ENCODE measurements at regions of chr19 and their contacts with region 1.

Region 1: DNA sequence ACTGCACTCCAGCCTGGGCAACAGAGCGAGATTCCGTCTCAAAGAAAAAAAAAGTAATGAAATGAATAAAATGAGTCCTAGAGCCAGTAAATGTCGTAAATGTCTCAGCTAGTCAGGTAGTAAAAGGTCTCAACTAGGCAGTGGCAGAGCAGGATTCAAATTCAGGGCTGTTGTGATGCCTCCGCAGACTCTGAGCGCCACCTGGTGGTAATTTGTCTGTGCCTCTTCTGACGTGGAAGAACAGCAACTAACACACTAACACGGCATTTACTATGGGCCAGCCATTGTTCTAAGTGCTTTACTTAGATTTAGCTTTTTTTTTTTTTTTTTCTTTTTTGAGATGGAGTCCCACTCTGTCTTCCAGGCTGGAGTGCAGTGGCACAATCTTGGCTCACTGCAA is 30.2 kb downstream of the CYP2F1 start:
- DNase-seq: peak; percentile 82
- H3K4me3 ChIP-seq: no peak overlapping the region
- H3K27ac ChIP-seq: no peak overlapping the region
- H3K4me1 ChIP-seq: no peaks in the 10 kb centered on the region
- H3K27me3 ChIP-seq: peaks cover 8% of the 10 kb centered on the region; the same call in 1 of the 2 replicates

Region 2: DNA sequence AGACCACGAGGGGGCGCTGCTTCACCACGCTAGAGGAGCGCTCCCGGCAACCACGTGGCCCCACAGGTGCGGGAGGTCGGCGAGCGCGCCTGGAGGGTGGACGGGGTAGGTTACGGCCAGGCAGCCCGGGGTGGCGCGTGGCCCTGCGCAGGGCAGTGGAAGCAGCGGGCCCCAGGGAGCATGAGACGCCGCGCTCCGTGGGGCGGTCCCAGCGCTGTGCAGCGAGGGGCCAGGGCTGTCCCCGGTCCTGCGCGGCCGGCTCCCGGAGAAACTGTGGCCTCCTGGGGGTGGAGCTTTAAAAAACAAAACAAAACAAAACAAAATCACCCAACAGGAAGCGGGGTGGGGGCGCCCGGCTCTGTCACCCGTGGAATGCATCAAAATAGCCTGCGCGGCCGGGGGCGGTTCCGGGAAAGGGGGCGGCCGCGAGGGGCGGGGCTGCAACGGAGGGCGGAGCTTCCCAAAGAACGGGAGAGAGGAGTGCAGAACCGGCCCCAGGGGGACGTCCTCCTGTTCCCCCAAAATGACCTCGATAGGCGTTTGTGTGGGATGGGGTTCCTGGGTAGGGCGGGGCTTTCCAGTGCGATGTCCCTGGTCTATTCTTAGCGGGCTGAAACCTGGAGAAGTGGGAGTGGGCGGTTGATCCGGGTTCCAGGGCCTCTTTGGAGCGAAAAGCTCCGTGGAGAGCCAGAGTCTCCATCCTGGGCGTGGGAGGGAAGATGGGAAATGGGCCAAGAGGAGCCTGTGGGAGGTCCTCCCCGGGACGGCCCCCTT is 481.3 kb before region 1 on chr19:
- in situ Hi-C with region 1: loop called (anchors 25 kb)
- DNase-seq: peak; percentile 91
- H3K4me3 ChIP-seq: peak overlapping the region; percentile 73
- H3K27ac ChIP-seq: peak overlapping the region; percentile 28
- H3K4me1 ChIP-seq: peaks cover 17% of the 10 kb centered on the region
- H3K27me3 ChIP-seq: no peaks in the 10 kb centered on the region

Region 3: GRCh38 chr19:41111296-41111695 is 33.1 kb before region 1 on chr19:
- in situ Hi-C with region 1: no loop called
- DNase-seq: no peak
- H3K4me3 ChIP-seq: no peak overlapping the region
- H3K27ac ChIP-seq: no peak overlapping the region
- H3K4me1 ChIP-seq: no peaks in the 10 kb centered on the region
- H3K27me3 ChIP-seq: 0 out of 2 replicates have a peak, but pooled peaks cover 20% of the 10 kb centered on the region

Measured in GM23248 (cell line).